ENCODE measurements at regions of chr19 and their contacts with region 1.

Region 1: DNA sequence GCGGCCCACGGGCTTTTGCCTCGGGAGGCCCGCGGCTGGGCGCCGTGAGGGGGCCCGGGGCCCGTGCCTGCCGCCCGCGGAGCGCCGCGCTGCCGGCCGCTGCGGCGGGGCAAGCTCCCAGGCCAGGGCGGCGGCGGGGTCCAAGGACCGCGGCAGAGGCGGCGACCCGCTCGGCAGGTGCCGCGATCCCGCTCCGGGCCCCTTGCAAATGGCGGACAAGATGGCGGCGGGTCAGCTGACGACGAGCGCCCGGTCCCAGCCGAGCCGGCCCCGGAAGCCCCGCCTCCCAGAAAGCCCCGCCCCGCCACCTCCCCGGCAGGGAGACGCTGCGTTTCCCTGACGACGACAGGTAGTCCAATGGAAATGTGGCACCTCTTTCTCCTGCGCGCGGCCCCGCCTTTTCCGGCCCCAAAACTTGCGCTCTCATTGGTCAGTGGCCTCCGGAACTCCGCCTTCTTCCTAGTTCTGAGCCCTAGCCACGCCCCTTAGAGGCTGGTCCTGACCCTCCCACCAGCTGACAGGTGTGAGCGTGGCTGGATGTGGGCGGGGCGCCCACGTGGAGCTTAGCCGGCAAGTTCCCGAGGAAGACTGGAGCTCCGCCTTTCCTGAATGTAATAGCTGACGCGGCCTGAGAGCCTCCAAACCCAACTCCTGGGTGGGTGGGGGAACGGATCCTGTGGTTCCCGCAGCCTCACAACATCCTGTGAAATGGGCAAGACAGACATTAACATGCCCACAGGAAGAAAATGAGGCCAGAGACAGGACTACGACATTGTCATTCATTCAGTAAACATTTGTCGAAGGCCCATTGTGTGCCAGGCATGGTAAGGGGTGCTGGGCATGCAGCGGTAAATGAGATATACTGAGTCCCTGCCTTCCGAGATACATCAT is at the start of gene AP3D1:
- DNase-seq: peak; percentile 93 to 98
- H3K4me3 ChIP-seq: peak within 1 kb of the TSS; percentile 83
- H3K27ac ChIP-seq: peak within 1 kb of the TSS; percentile 68
- H3K4me1 ChIP-seq: peaks cover 43% of the 10 kb centered on the region
- H3K27me3 ChIP-seq: no peaks in the 10 kb centered on the region
- CTCF ChIP-seq: no peak
- total RNA-seq, gene AP3D1: 75.5 and 87.2 TPM in 2 replicates

Region 2: GRCh38 chr19:1103708-1104310 is 1047.8 kb before region 1 on chr19 and contains the start of gene GPX4:
- CTCF ChIA-PET with region 1: no interaction called
- POLR2A ChIA-PET with region 1: no interaction called
- intact Hi-C with region 1: no loop called
- DNase-seq: peak; percentile 93 to 96
- H3K4me3 ChIP-seq: peak within 1 kb of the TSS; percentile 78
- H3K27ac ChIP-seq: peak within 1 kb of the TSS; percentile 97
- H3K4me1 ChIP-seq: peaks cover 72% of the 10 kb centered on the region
- H3K27me3 ChIP-seq: no peaks in the 10 kb centered on the region
- CTCF ChIP-seq: no peak
- total RNA-seq, gene GPX4: 465 and 489 TPM in 2 replicates

Region 3: GRCh38 chr19:1308718-1309117 is 842.9 kb before region 1 on chr19:
- CTCF ChIA-PET with region 1: no interaction called
- POLR2A ChIA-PET with region 1: interaction called, 12 read pairs
- intact Hi-C with region 1: no loop called
- DNase-seq: no peak
- H3K4me3 ChIP-seq: no peak overlapping the region
- H3K27ac ChIP-seq: no peak overlapping the region
- H3K4me1 ChIP-seq: peaks cover 14% of the 10 kb centered on the region
- H3K27me3 ChIP-seq: no peaks in the 10 kb centered on the region
- CTCF ChIP-seq: no peak

Region 4: GRCh38 chr19:2096480-2097329 is 54.9 kb before region 1 on chr19 and contains the start of gene IZUMO4:
- CTCF ChIA-PET with region 1: no interaction called
- POLR2A ChIA-PET with region 1: interaction called, 5 read pairs
- intact Hi-C with region 1: loop called (anchors 10 kb)
- DNase-seq: peak; percentile 77 to 95
- H3K4me3 ChIP-seq: peak within 1 kb of the TSS; percentile 68
- H3K27ac ChIP-seq: peak within 1 kb of the TSS; percentile 67
- H3K4me1 ChIP-seq: no peaks in the 10 kb centered on the region
- H3K27me3 ChIP-seq: no peaks in the 10 kb centered on the region
- CTCF ChIP-seq: no peak; the same call in 1 of the 2 replicates
- total RNA-seq, gene IZUMO4: 1.5 and 2.4 TPM in 2 replicates

Region 5: GRCh38 chr19:2391118-2391725 is 239.6 kb after region 1 on chr19:
- CTCF ChIA-PET with region 1: no interaction called
- POLR2A ChIA-PET with region 1: no interaction called
- intact Hi-C with region 1: loop called (anchors 10 kb)
- DNase-seq: peak in 1 of 2 experiments; percentile 60
- H3K4me3 ChIP-seq: no peak overlapping the region
- H3K27ac ChIP-seq: no peak overlapping the region
- H3K4me1 ChIP-seq: peaks cover 3% of the 10 kb centered on the region; the same call in 1 of the 2 replicates
- H3K27me3 ChIP-seq: no peaks in the 10 kb centered on the region
- CTCF ChIP-seq: peak; percentile 76

Region 6: GRCh38 chr19:2627319-2627829 is 475.8 kb after region 1 on chr19:
- CTCF ChIA-PET with region 1: no interaction called
- POLR2A ChIA-PET with region 1: no interaction called
- intact Hi-C with region 1: loop called (anchors 10 kb)
- DNase-seq: peak; percentile 64 to 91
- H3K4me3 ChIP-seq: no peak overlapping the region
- H3K27ac ChIP-seq: peak overlapping the region; percentile 50; the same call in 1 of the 2 replicates
- H3K4me1 ChIP-seq: peaks cover 9% of the 10 kb centered on the region
- H3K27me3 ChIP-seq: no peaks in the 10 kb centered on the region
- CTCF ChIP-seq: no peak